CD4-positive, alpha-beta T cell (primary cell): ENCODE measurements at regions of chr7 and their contacts with region 1.

Region 1: DNA sequence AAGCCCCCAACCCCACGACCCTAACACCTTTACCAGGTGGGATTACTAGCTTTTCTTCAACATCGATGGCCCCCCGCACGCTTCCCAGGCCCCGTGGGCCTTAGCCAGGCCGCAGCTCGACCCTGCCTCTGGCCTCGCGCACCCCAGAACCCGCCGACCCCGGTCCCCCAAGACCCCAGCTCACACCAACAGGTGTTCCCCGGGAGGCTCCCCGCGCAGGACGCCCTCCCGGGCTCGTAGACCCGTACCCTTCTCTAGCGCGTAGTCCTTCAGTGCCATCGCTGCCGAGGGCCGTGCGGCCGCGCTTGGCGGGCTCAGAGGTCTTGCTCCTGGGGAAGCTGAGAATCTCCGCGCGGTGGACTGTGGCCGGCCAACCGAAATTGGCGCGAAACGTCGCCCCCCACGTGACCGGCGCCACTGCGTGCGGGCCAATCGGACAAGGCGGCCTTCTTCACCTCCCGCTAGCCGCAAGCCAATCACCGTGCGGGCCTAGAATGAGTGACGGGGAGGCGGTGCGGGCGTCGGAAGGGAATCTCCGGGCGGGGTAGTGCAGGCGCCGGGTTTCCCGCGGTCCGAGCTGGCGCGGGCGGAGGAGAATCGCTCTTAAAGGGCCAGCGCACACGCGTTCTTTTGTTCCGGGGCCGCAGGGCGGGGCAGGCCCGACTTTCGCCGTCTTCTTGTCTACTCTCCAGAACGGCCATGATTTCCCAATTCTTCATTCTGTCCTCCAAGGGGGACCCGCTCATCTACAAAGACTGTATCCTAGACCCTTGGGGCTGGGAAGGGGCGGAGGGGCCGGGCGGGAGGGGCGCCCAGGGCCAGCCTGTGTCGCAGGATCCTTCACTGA is at the starts of genes AP4M1 and MCM7:
- DNase-seq: peak; percentile 87 to 98 (median 93)
- ATAC-seq: peak; percentile 85
- H3K4me3 ChIP-seq: peak within 1 kb of the TSS; percentile 97
- H3K4me3 Mint-ChIP-seq: peak within 1 kb of the TSS; percentile 98
- H3K27ac ChIP-seq: peak within 1 kb of the TSS; percentile 90 to 95
- H3K27ac Mint-ChIP-seq: peak within 1 kb of the TSS; percentile 98
- H3K4me1 ChIP-seq: peaks cover 38% of the 10 kb centered on the region
- H3K4me1 Mint-ChIP-seq: peaks cover 47% of the 10 kb centered on the region
- H3K27me3 ChIP-seq: no peaks in the 10 kb centered on the region
- H3K27me3 Mint-ChIP-seq: no peaks in the 10 kb centered on the region
- CTCF ChIP-seq: no peak
- total RNA-seq, gene AP4M1: 2.8 to 4.0 TPM
- total RNA-seq, gene MCM7: 54.5 to 56.0 TPM

Region 2: GRCh38 chr7:100049441-100050311 is 51.6 kb before region 1 on chr7 and contains the start of gene ZSCAN21:
- CTCF ChIA-PET with region 1: no interaction called
- POLR2A ChIA-PET with region 1: interaction called, 16 read pairs
- intact Hi-C with region 1: loop called in 1 of 2 experiments (anchors 1 kb)
- DNase-seq: peak; percentile 59 to 89 (median 74)
- ATAC-seq: peak; percentile 88
- H3K4me3 ChIP-seq: peak within 1 kb of the TSS; percentile 97
- H3K4me3 Mint-ChIP-seq: peak within 1 kb of the TSS; percentile 95
- H3K27ac ChIP-seq: peak within 1 kb of the TSS; percentile 77 to 88
- H3K27ac Mint-ChIP-seq: peak within 1 kb of the TSS; percentile 96
- H3K4me1 ChIP-seq: peaks cover 18% of the 10 kb centered on the region
- H3K4me1 Mint-ChIP-seq: peaks cover 25% of the 10 kb centered on the region
- H3K27me3 ChIP-seq: no peaks in the 10 kb centered on the region
- H3K27me3 Mint-ChIP-seq: no peaks in the 10 kb centered on the region
- CTCF ChIP-seq: peak; percentile 20
- total RNA-seq, gene ZSCAN21: 2.0 to 2.7 TPM

Region 3: DNA sequence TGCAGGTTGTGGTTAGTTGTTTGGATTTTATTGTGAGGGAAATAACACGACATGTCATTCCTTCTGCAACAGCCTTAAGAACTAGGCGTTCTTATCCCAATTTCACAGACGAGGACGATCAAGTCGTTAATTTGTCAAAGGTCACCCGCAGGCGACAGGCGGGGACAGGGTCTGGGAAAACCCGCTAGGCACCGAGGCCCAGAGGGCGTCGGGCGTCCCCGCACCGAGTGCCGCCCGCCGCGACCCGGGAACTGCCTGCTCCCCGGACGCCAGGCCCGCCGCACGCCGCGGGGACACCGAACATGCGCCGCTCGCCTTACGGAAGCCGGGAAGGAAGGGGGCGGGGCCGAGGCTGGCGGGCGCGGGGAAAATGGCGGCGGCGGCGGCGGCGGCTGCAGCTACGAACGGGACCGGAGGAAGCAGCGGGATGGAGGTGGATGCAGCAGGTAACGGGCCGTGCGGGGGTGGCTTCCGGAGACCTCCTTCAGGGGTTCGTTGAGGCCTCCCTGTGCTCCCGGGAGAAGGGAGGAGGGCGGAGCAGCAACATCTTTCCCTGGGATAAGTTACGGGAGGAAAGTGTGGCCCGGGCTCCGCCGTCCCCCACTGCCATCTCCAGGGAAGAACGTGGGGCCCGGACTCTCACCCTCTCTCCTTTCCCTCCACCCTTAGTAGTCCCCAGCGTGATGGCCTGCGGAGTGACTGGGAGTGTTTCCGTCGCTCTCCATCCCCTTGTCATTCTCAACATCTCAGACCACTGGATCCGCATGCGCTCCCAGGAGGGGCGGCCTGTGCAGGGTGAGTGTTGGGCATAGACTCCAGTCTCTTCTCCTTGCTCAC is 12.4 kb before region 1 on chr7 and contains the start of gene COPS6:
- CTCF ChIA-PET with region 1: interaction called, 14 read pairs
- POLR2A ChIA-PET with region 1: interaction called, 46 read pairs
- intact Hi-C with region 1: loop called (anchors 1 kb)
- DNase-seq: peak; percentile 79 to 94 (median 84)
- ATAC-seq: peak; percentile 87
- H3K4me3 ChIP-seq: peak within 1 kb of the TSS; percentile 92
- H3K4me3 Mint-ChIP-seq: peak within 1 kb of the TSS; percentile 90
- H3K27ac ChIP-seq: peak within 1 kb of the TSS; percentile 83 to 86
- H3K27ac Mint-ChIP-seq: peak within 1 kb of the TSS; percentile 91
- H3K4me1 ChIP-seq: peaks cover 21% of the 10 kb centered on the region
- H3K4me1 Mint-ChIP-seq: peaks cover 25% of the 10 kb centered on the region
- H3K27me3 ChIP-seq: no peaks in the 10 kb centered on the region
- H3K27me3 Mint-ChIP-seq: no peaks in the 10 kb centered on the region
- CTCF ChIP-seq: no peak
- total RNA-seq, gene COPS6: 79.0 to 83.9 TPM

Region 4: GRCh38 chr7:100119062-100119700 is 17.9 kb after region 1 on chr7 and contains the starts of genes CNPY4 and TAF6:
- CTCF ChIA-PET with region 1: interaction called, 6 read pairs
- POLR2A ChIA-PET with region 1: interaction called, 58 read pairs
- intact Hi-C with region 1: loop called (anchors 1 kb)
- DNase-seq: peak; percentile 90 to 98 (median 96)
- ATAC-seq: peak; percentile 70
- H3K4me3 ChIP-seq: peak within 1 kb of the TSS; percentile 93
- H3K4me3 Mint-ChIP-seq: peak within 1 kb of the TSS; percentile 98
- H3K27ac ChIP-seq: peak within 1 kb of the TSS; percentile 79 to 98
- H3K27ac Mint-ChIP-seq: peak within 1 kb of the TSS; percentile 97
- H3K4me1 ChIP-seq: peaks cover 31% of the 10 kb centered on the region
- H3K4me1 Mint-ChIP-seq: peaks cover 24% of the 10 kb centered on the region
- H3K27me3 ChIP-seq: no peaks in the 10 kb centered on the region
- H3K27me3 Mint-ChIP-seq: no peaks in the 10 kb centered on the region
- CTCF ChIP-seq: no peak
- total RNA-seq, gene CNPY4: 22.5 to 25.6 TPM
- total RNA-seq, gene TAF6: 34.8 to 37.4 TPM

Region 5: GRCh38 chr7:100126931-100127865 is 26.0 kb after region 1 on chr7 and contains the start of gene MBLAC1:
- CTCF ChIA-PET with region 1: interaction called, 7 read pairs
- POLR2A ChIA-PET with region 1: interaction called, 58 read pairs
- intact Hi-C with region 1: loop called (anchors 1 to 2 kb)
- DNase-seq: peak; percentile 87 to 97 (median 91)
- ATAC-seq: peak; percentile 80
- H3K4me3 ChIP-seq: peak within 1 kb of the TSS; percentile 96
- H3K4me3 Mint-ChIP-seq: peak within 1 kb of the TSS; percentile 100
- H3K27ac ChIP-seq: peak within 1 kb of the TSS; percentile 96 to 99
- H3K27ac Mint-ChIP-seq: peak within 1 kb of the TSS; percentile 100
- H3K4me1 ChIP-seq: peaks cover 39% of the 10 kb centered on the region
- H3K4me1 Mint-ChIP-seq: peaks cover 31% of the 10 kb centered on the region
- H3K27me3 ChIP-seq: no peaks in the 10 kb centered on the region
- H3K27me3 Mint-ChIP-seq: no peaks in the 10 kb centered on the region
- CTCF ChIP-seq: no peak
- total RNA-seq, gene MBLAC1: 3.7 to 4.4 TPM

Region 6: DNA sequence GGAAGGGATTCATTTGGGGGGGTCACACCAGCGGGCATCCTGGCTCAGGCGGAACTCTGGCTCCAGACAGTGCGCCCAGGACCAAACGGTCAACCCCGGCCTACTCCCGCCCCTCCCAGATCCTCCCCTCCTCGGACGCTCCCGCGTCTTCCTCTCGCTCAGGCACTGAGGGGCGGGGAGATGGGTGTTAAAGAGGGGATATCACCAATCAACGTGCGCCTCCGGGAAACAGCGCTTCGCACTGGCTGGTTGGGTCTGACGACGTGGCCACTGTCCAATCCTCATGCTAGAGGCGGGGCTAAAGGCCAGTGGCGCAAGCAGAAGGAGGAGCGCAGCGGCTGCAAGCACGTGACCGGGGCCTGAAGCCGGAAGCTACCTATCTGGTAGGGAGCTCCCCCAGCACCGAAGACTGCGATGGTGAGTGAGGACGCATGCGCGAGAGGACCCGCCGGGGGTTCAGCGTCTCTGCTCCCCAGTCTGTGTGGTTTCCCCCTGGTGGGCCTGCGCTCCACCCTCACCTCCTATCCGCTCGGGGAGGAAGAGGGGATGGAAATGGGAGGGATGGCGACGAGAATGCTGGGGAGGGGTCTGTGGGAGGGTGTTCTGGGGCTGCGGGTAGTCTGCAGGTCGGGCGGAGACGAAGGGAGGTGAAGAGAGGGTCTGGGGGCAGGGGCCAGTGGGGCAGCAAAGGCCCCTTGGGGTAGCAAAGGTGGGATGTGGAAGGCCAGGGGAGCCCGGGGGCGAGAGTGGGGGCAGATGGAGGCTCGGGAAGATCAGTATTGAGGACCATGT is 47.5 kb after region 1 on chr7 and contains the start of gene LAMTOR4:
- CTCF ChIA-PET with region 1: no interaction called
- POLR2A ChIA-PET with region 1: interaction called, 16 read pairs
- intact Hi-C with region 1: no loop called
- DNase-seq: peak; percentile 94 to 100 (median 97)
- ATAC-seq: peak; percentile 95
- H3K4me3 ChIP-seq: peak within 1 kb of the TSS; percentile 99
- H3K4me3 Mint-ChIP-seq: peak within 1 kb of the TSS; percentile 92
- H3K27ac ChIP-seq: peak within 1 kb of the TSS; percentile 93 to 94
- H3K27ac Mint-ChIP-seq: peak within 1 kb of the TSS; percentile 95
- H3K4me1 ChIP-seq: peaks cover 41% of the 10 kb centered on the region
- H3K4me1 Mint-ChIP-seq: peaks cover 38% of the 10 kb centered on the region
- H3K27me3 ChIP-seq: no peaks in the 10 kb centered on the region
- H3K27me3 Mint-ChIP-seq: no peaks in the 10 kb centered on the region
- CTCF ChIP-seq: peak; percentile 9
- total RNA-seq, gene LAMTOR4: 107 to 125 TPM

Region 7: GRCh38 chr7:100221231-100221718 is 120.0 kb after region 1 on chr7:
- CTCF ChIA-PET with region 1: no interaction called
- POLR2A ChIA-PET with region 1: interaction called, 18 read pairs
- intact Hi-C with region 1: no loop called
- DNase-seq: peak; percentile 62 to 95 (median 78)
- ATAC-seq: peak; percentile 69
- H3K4me3 ChIP-seq: peak overlapping the region; percentile 89
- H3K4me3 Mint-ChIP-seq: peak overlapping the region; percentile 95
- H3K27ac ChIP-seq: peak overlapping the region; percentile 98 to 99
- H3K27ac Mint-ChIP-seq: peak overlapping the region; percentile 98
- H3K4me1 ChIP-seq: peaks cover 85% of the 10 kb centered on the region
- H3K4me1 Mint-ChIP-seq: peaks cover 72% of the 10 kb centered on the region
- H3K27me3 ChIP-seq: no peaks in the 10 kb centered on the region
- H3K27me3 Mint-ChIP-seq: no peaks in the 10 kb centered on the region
- CTCF ChIP-seq: no peak

Region 8: DNA sequence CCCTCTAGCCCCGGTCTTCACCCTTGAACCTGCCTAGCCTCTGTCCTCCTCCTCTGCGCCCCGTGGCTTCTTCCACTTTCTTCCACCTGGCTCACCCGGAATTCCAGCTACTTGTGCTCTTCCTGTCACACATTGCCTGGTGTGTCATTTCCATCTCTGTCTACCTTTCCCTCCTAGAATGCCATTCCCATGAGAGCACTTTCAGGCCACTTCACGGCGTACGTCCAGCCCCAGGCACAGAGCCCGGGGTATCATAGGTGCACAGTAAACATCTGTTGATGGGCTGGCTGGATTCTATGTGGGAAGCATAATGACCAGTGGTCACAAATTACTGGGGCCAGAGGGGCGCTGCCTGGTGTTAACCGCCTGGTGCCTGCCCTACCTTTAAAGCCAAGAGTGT is 1877.4 kb after region 1 on chr7:
- CTCF ChIA-PET with region 1: no interaction called
- POLR2A ChIA-PET with region 1: no interaction called
- intact Hi-C with region 1: no loop called
- DNase-seq: no peak
- ATAC-seq: no peak
- H3K4me3 ChIP-seq: no peak overlapping the region
- H3K4me3 Mint-ChIP-seq: no peak overlapping the region
- H3K27ac ChIP-seq: no peak overlapping the region
- H3K27ac Mint-ChIP-seq: no peak overlapping the region
- H3K4me1 ChIP-seq: no peaks in the 10 kb centered on the region
- H3K4me1 Mint-ChIP-seq: no peaks in the 10 kb centered on the region
- H3K27me3 ChIP-seq: no peaks in the 10 kb centered on the region
- H3K27me3 Mint-ChIP-seq: no peaks in the 10 kb centered on the region
- CTCF ChIP-seq: no peak